ENCODE measurements at regions of chr15 and their contacts with region 1.

Region 1: DNA sequence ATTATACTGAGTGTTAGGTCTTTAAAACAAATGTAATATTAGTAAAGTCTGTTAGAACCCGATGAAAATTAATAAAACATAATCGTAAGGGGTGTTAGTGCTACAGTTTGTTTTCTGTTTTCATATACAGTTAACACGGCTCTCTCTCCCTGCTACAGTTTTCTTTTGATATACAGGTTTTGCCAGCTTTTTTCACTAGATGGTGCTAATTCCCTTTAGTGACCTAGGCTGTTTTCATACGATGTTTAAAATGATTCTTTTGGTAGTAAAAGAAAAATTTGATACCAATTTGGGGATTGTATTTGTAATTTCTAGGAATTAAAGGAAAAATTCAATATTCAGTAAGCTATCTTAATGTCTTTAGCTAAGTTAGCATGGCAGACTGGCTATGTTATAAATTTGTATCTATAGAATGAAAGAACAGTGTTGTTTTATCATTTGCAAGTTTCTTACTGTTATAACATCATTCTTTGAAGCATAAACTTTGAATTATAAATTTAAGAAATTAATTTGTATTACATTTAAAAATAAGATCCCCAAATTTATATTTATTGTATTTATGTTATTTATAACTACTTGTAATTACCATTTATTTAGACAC is 11.5 kb downstream of the APH1B start:
- DNase-seq: no peak
- H3K4me3 ChIP-seq: no peak overlapping the region
- H3K27ac ChIP-seq: no peak overlapping the region
- H3K4me1 ChIP-seq: no peaks in the 10 kb centered on the region
- H3K27me3 ChIP-seq: no peaks in the 10 kb centered on the region
- CTCF ChIP-seq: peak; percentile 75

Region 2: GRCh38 chr15:63364399-63365272 is 75.8 kb after region 1 on chr15:
- CTCF ChIA-PET with region 1: no interaction called
- POLR2A ChIA-PET with region 1: no interaction called
- intact Hi-C with region 1: no loop called
- DNase-seq: no peak
- H3K4me3 ChIP-seq: no peak overlapping the region
- H3K27ac ChIP-seq: no peak overlapping the region
- H3K4me1 ChIP-seq: peaks cover 14% of the 10 kb centered on the region
- H3K27me3 ChIP-seq: no peaks in the 10 kb centered on the region
- CTCF ChIP-seq: no peak

Region 3: DNA sequence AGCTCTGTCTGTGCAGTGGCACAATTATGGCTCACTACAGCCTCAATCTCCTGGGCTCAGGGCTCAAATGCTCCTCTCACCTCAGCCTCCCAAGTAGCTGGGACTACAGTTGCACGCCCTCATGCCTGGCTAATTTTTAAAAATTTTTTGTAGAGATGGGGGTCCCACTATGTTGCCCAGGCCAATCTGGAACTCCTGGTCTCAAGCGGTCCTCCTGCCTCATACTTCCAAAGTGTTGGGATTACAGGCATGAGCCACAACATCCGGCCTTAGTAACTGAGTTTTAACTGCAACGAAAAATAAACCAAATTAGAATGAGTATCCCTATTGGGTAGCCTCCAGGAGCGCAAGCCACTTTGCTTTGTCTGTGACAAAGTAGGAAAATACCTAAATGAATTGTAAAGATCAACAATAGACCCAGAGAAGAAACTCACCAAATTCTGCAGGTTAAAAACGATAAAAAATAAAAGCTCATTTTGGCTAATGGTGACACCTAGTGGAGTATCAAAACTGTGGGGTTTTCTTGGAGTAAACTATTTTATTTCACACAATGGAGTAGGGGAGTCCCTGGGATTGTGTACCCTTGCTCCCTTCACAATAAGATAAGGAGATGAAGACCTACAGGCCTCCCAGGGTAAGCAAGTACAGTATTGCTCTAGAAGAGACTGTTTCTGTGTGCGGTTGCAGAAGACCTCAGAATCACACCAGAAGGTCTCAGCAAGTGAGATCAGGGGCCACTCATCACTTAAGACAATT is 113.8 kb after region 1 on chr15:
- CTCF ChIA-PET with region 1: interaction called, 8 read pairs
- POLR2A ChIA-PET with region 1: no interaction called
- intact Hi-C with region 1: loop called (anchors 1 kb)
- DNase-seq: no peak
- H3K4me3 ChIP-seq: no peak overlapping the region
- H3K27ac ChIP-seq: no peak overlapping the region
- H3K4me1 ChIP-seq: no peaks in the 10 kb centered on the region
- H3K27me3 ChIP-seq: no peaks in the 10 kb centered on the region
- CTCF ChIP-seq: peak; percentile 70

Region 4: DNA sequence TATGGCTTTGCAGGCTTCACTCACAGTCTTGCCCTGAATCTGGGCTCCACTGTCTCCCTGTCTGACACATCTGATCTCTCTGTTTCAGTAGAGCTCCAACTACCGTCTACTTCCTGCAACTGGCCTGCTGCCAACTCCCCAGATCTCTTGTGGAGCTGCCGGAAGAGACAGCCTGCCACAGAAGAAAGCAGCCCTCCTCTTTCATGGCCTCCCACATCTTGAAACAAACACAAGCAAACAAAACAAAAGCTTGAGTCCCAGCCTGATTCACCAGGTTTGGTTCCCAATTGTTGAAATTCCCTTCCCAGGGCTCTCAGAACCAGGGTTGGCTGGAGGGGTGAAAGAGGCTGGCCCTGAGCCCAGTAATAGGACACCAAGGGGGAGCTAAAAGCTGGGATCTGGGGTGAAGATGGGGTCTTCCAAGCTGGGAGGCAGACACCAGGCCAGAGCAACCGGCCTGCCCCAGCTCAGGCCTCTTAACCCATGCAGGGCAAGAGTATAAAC is 148.0 kb after region 1 on chr15:
- CTCF ChIA-PET with region 1: no interaction called
- POLR2A ChIA-PET with region 1: interaction called, 14 read pairs
- intact Hi-C with region 1: no loop called
- DNase-seq: peak in 1 of 2 experiments; percentile 52
- H3K4me3 ChIP-seq: no peak overlapping the region
- H3K27ac ChIP-seq: no peak overlapping the region
- H3K4me1 ChIP-seq: no peaks in the 10 kb centered on the region
- H3K27me3 ChIP-seq: no peaks in the 10 kb centered on the region
- CTCF ChIP-seq: no peak

Region 5: GRCh38 chr15:63600616-63601025 is 311.7 kb after region 1 on chr15:
- CTCF ChIA-PET with region 1: no interaction called
- POLR2A ChIA-PET with region 1: no interaction called
- intact Hi-C with region 1: loop called (anchors 5 kb)
- DNase-seq: peak; percentile 63 to 91
- H3K4me3 ChIP-seq: peak overlapping the region; percentile 82
- H3K27ac ChIP-seq: peak overlapping the region; percentile 56; the same call in 1 of the 2 replicates
- H3K4me1 ChIP-seq: peaks cover 6% of the 10 kb centered on the region; the same call in 1 of the 2 replicates
- H3K27me3 ChIP-seq: no peaks in the 10 kb centered on the region
- CTCF ChIP-seq: no peak